ENCODE measurements at regions of chr17 and their contacts with region 1.

Region 1: GRCh38 chr17:37489197-37490001 is at the start of gene DUSP14:
- DNase-seq: peak; percentile 72 to 86 (median 84)
- ATAC-seq: peak; percentile 88
- H3K4me3 ChIP-seq: peak within 1 kb of the TSS; percentile 67
- H3K4me3 Mint-ChIP-seq: peak within 1 kb of the TSS; percentile 91 to 98 (median 95)
- H3K27ac ChIP-seq: peak within 1 kb of the TSS; percentile 79
- H3K27ac Mint-ChIP-seq: peak within 1 kb of the TSS; percentile 81 to 95 (median 88)
- H3K4me1 ChIP-seq: peaks cover 19 to 20% of the 10 kb centered on the region in 2 donors
- H3K4me1 Mint-ChIP-seq: peaks cover 20 to 39% (median 27%) of the 10 kb centered on the region in 7 donors
- H3K27me3 ChIP-seq: no peaks in the 10 kb centered on the region
- H3K27me3 Mint-ChIP-seq: peaks cover 0 to 3% (median 0%) of the 10 kb centered on the region in 5 donors
- total RNA-seq, gene DUSP14: 4.3 to 11.7 (median 8.7) TPM

Region 2: DNA sequence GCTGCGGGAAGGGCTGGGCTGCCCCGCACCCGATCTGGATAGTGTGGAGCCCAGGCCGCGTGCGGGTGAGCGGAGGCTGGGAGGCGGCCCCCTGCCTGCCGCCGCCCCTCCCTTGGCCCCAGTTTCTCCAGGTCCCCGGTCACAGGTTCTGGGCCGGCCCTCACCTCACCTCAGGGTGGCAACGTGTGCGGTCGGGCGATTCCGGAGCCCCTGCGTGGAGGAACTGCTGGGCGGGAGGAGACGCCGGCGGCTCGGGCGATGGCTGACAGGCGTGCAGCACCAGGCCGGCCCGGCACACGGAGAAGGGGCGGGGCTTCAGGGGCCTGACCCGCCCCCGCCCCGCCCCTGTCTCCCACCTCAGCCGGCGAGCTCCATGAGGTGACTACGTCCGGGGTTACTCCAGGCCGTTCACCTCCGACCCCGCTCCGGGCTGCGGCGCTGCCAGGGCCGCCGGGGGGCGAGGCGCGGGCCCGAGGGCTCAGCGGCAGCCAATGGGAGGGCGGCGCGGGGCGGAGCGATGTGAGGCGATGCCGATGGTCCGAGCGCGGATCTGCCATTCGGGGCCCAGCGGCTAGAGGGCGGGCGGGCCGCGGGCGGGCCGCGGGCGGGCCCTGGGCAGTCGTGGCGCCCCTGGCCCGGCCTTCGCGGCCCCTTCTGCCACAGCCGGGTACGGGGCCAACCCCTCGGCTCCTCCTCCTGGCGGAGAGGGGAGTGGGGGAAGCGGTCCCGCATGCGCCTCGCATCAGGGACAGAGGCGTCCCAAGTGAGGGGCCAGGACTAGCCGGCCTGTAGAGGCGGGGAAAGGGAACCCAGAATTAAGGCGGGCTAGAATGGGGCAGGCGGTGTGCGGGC is 130.3 kb before region 1 on chr17:
- CTCF ChIA-PET with region 1: no interaction called
- POLR2A ChIA-PET with region 1: no interaction called
- intact Hi-C with region 1: loop called in 1 of 2 experiments (anchors 5 kb)
- DNase-seq: peak; percentile 81 to 95 (median 85)
- ATAC-seq: peak; percentile 97
- H3K4me3 ChIP-seq: peak overlapping the region; percentile 80
- H3K4me3 Mint-ChIP-seq: peak overlapping the region; percentile 77 to 96 (median 91)
- H3K27ac ChIP-seq: peak overlapping the region; percentile 67
- H3K27ac Mint-ChIP-seq: peak overlapping the region in 7 of 9 donors; percentile 80 to 92 (median 87)
- H3K4me1 ChIP-seq: peaks cover 6 to 14% of the 10 kb centered on the region in 2 donors
- H3K4me1 Mint-ChIP-seq: peaks cover 11 to 28% (median 23%) of the 10 kb centered on the region in 7 donors
- H3K27me3 ChIP-seq: no peaks in the 10 kb centered on the region
- H3K27me3 Mint-ChIP-seq: no peaks in the 10 kb centered on the region

Region 3: DNA sequence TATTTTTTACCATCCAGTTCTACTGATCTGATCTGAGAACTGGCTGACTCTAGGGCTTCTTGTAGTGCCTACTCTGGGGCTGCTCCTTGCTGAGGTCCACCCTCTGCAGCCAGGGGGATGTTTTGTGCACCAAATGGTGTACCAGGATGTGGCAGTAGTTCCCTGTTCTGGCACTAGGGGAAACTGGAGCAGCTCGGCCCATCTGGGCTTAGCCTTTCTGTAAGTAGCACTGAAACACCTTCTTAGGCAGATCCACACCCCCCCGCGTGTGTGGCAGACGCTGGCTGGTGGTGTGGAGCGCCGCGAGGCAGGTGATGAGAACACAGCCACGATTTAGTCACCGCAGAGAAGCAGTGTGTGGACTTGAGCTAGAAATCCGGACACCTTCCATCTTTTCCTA is 17.3 kb after region 1 on chr17:
- CTCF ChIA-PET with region 1: interaction called, 4 read pairs
- POLR2A ChIA-PET with region 1: no interaction called
- intact Hi-C with region 1: loop called in 1 of 2 experiments (anchors 2 kb)
- DNase-seq: peak in 1 of 9 donors; percentile 10
- ATAC-seq: peak; percentile 50
- H3K4me3 ChIP-seq: no peak overlapping the region
- H3K4me3 Mint-ChIP-seq: no peak overlapping the region
- H3K27ac ChIP-seq: no peak overlapping the region
- H3K27ac Mint-ChIP-seq: peak overlapping the region in 2 of 9 donors; percentile 31 to 74
- H3K4me1 ChIP-seq: peaks cover 0 to 6% of the 10 kb centered on the region in 2 donors
- H3K4me1 Mint-ChIP-seq: peaks cover 12 to 23% (median 18%) of the 10 kb centered on the region in 7 donors
- H3K27me3 ChIP-seq: no peaks in the 10 kb centered on the region
- H3K27me3 Mint-ChIP-seq: no peaks in the 10 kb centered on the region

Region 4: DNA sequence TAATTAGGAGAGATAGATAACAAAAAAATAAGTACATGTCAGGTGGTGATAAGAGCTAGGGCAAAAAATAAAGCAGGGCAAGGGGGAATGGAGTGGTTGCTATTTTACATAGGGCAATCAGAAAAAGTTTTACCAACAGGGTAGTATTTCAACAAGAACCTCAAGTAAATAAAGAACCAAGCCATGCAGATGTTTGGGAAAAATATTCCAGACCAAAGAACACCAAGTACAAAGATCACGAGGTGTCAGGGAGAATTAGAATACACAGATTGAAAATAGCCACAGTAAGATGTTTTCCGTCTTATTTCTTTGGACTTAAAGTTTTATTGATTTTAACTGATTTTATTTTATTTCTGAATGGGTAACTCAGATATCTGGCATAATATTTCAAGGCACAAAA is 108.7 kb after region 1 on chr17:
- CTCF ChIA-PET with region 1: no interaction called
- POLR2A ChIA-PET with region 1: no interaction called
- intact Hi-C with region 1: no loop called
- DNase-seq: no peak
- ATAC-seq: no peak
- H3K4me3 ChIP-seq: no peak overlapping the region
- H3K4me3 Mint-ChIP-seq: peak overlapping the region in 1 of 10 donors; percentile 11
- H3K27ac ChIP-seq: no peak overlapping the region
- H3K27ac Mint-ChIP-seq: peak overlapping the region in 6 of 9 donors; percentile 3 to 63 (median 52)
- H3K4me1 ChIP-seq: peaks cover 3 to 16% of the 10 kb centered on the region in 2 donors
- H3K4me1 Mint-ChIP-seq: peaks cover 36 to 79% (median 67%) of the 10 kb centered on the region in 7 donors
- H3K27me3 ChIP-seq: no peaks in the 10 kb centered on the region
- H3K27me3 Mint-ChIP-seq: no peaks in the 10 kb centered on the region

Measured in naive thymus-derived CD4-positive, alpha-beta T cell (primary cell).